ENCODE measurements at regions of chr14 and their contacts with region 1.

Region 1: DNA sequence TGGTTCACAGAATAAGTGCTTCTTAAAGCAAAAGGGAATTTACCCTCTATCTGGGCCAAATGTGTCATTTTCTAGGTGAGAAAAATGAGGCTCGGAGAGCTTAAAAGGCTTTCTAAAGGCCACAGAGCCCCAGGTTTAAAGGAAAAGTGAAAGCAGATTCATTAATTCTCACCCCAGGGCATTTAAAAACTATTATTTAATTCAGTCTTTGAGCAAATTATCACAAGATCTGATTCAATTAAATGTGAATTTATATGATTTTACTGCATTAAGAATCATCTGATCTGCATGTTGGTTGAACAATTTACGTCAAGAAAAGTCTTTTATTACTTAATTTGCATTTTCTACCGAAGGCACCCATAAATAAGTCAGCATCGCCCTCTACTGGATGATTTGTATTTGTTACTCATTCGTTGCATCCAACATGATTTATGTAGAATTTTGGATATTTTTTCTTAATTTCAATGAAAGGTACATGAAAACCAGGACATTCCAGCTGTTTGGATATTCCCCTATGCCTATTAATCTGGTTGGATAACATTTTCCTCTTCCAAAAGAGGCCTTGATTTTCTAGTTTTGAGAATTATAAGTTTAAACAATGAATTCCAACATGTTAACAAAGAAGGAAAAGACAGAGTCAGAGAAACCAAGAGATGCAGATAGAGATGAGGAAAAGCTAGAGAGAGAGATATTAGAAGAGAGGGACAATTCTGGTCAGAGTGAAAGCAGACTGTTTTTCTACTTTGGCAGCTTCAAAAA is 19.1 kb upstream of the DHRS7 start:
- DNase-seq: no peak
- H3K4me3 ChIP-seq: peak overlapping the region; percentile 45 to 60 (median 48)
- H3K27ac ChIP-seq: peak overlapping the region; percentile 0 to 54 (median 52)
- H3K4me1 ChIP-seq: peaks cover 6 to 13% (median 9%) of the 10 kb centered on the region in 4 donors
- H3K27me3 ChIP-seq: no peaks in the 10 kb centered on the region
- CTCF ChIP-seq: peak; percentile 72 to 76 (median 73)
- EP300 ChIP-seq: no peak
- POLR2A ChIP-seq: peak; percentile 7

Region 2: GRCh38 chr14:59964251-59965007 is 219.9 kb before region 1 on chr14:
- intact Hi-C with region 1: loop called (anchors 2 kb)
- DNase-seq: no peak
- H3K4me3 ChIP-seq: peak overlapping the region in 1 of 4 donors; percentile 37
- H3K27ac ChIP-seq: no peak overlapping the region
- H3K4me1 ChIP-seq: peaks cover 0 to 10% (median 0%) of the 10 kb centered on the region in 4 donors
- H3K27me3 ChIP-seq: peaks cover 0 to under 1% (median 0%) of the 10 kb centered on the region in 4 donors
- CTCF ChIP-seq: no peak
- EP300 ChIP-seq: no peak
- POLR2A ChIP-seq: no peak

Region 3: GRCh38 chr14:60064491-60065072 is 119.7 kb before region 1 on chr14:
- intact Hi-C with region 1: loop called (anchors 2 kb)
- DNase-seq: no peak
- H3K4me3 ChIP-seq: no peak overlapping the region
- H3K27ac ChIP-seq: no peak overlapping the region
- H3K4me1 ChIP-seq: no peaks in the 10 kb centered on the region
- H3K27me3 ChIP-seq: no peaks in the 10 kb centered on the region
- CTCF ChIP-seq: peak; percentile 55 to 65 (median 56)
- EP300 ChIP-seq: no peak
- POLR2A ChIP-seq: no peak